Activated T-helper 2 cell treated with anti-CD3 and anti-CD28 coated beads, Interferon-gamma antibody, Interleukin-2, Interleukin-4, amounts not matched to agents 10 μg/mL and 5 μg/mL and 100 μg/mL, durations not matched to agents 14 hours and 24 hours and 36 hours (primary cell): ENCODE measurements at regions of chr10 and their contacts with region 1.

Region 1: GRCh38 chr10:8130973-8131911 is 76.8 kb downstream of the GATA3 start:
- DNase-seq: peak; percentile 55
- H3K4me3 Mint-ChIP-seq: peak overlapping the region; percentile 47
- H3K27ac Mint-ChIP-seq: peak overlapping the region; percentile 80
- H3K4me1 Mint-ChIP-seq: peaks cover 62% of the 10 kb centered on the region
- H3K27me3 Mint-ChIP-seq: no peaks in the 10 kb centered on the region

Region 2: DNA sequence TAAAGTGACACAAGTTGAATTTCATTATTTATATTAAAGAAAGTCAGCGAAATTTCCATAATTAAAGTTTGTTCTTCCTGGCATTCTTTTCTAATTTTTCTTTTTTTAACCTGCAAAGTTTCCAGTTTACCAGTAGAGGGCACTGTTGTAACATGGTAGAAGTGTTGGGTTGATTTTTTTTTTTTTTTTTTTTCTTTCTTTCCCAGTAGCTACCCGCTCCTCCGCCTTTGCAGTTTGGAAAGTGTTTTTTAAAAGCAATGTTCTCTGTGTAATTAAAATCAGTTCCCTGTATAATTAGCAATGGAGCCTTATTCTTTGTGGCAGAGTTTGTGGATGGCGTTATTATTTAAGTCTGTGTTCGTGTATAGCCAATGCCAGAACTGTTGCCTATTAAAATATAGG is 259.2 kb before region 1 on chr10:
- intact Hi-C with region 1: loop called (anchors 5 kb)
- DNase-seq: no peak
- H3K4me3 Mint-ChIP-seq: peak overlapping the region; percentile 89
- H3K27ac Mint-ChIP-seq: peak overlapping the region; percentile 64
- H3K4me1 Mint-ChIP-seq: peaks cover 13% of the 10 kb centered on the region
- H3K27me3 Mint-ChIP-seq: no peaks in the 10 kb centered on the region

Region 3: GRCh38 chr10:8088504-8088903 is 42.7 kb before region 1 on chr10:
- intact Hi-C with region 1: loop called (anchors 1 kb)
- DNase-seq: peak; percentile 47
- H3K4me3 Mint-ChIP-seq: no peak overlapping the region
- H3K27ac Mint-ChIP-seq: peak overlapping the region; percentile 71
- H3K4me1 Mint-ChIP-seq: peaks cover 42% of the 10 kb centered on the region
- H3K27me3 Mint-ChIP-seq: no peaks in the 10 kb centered on the region

Region 4: GRCh38 chr10:8254350-8254749 is 123.1 kb after region 1 on chr10:
- intact Hi-C with region 1: loop called (anchors 1 kb)
- DNase-seq: no peak
- H3K4me3 Mint-ChIP-seq: peak overlapping the region; percentile 18
- H3K27ac Mint-ChIP-seq: peak overlapping the region; percentile 84
- H3K4me1 Mint-ChIP-seq: peaks cover 42% of the 10 kb centered on the region
- H3K27me3 Mint-ChIP-seq: no peaks in the 10 kb centered on the region

Region 5: GRCh38 chr10:8365935-8366911 is 235.0 kb after region 1 on chr10:
- intact Hi-C with region 1: loop called (anchors 1 kb)
- DNase-seq: peak; percentile 46
- H3K4me3 Mint-ChIP-seq: peak overlapping the region; percentile 64
- H3K27ac Mint-ChIP-seq: peak overlapping the region; percentile 98
- H3K4me1 Mint-ChIP-seq: peaks cover 69% of the 10 kb centered on the region
- H3K27me3 Mint-ChIP-seq: no peaks in the 10 kb centered on the region

Region 6: DNA sequence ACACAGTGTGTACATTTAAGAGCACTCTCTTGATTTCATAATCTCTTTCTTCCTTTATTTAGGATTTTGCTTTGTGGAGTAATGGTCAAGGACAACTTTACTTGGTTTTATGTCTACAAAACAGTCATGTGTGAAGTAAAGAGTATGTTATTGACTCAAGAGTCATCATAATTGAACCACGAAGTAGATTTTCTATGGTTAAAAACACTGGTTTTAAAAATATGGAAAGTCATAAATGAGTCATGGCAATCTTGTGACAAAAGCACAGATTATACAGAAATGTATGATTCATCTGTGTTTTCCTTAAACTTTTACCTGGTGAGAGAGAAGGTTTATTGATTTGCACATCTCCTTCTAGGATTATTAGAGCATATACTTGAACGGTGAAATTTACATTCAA is 893.0 kb after region 1 on chr10:
- intact Hi-C with region 1: loop called (anchors 5 kb)
- DNase-seq: no peak
- H3K4me3 Mint-ChIP-seq: no peak overlapping the region
- H3K27ac Mint-ChIP-seq: peak overlapping the region; percentile 88
- H3K4me1 Mint-ChIP-seq: peaks cover 74% of the 10 kb centered on the region
- H3K27me3 Mint-ChIP-seq: no peaks in the 10 kb centered on the region